ENCODE measurements at regions of chr1 and their contacts with region 1.

Region 1: DNA sequence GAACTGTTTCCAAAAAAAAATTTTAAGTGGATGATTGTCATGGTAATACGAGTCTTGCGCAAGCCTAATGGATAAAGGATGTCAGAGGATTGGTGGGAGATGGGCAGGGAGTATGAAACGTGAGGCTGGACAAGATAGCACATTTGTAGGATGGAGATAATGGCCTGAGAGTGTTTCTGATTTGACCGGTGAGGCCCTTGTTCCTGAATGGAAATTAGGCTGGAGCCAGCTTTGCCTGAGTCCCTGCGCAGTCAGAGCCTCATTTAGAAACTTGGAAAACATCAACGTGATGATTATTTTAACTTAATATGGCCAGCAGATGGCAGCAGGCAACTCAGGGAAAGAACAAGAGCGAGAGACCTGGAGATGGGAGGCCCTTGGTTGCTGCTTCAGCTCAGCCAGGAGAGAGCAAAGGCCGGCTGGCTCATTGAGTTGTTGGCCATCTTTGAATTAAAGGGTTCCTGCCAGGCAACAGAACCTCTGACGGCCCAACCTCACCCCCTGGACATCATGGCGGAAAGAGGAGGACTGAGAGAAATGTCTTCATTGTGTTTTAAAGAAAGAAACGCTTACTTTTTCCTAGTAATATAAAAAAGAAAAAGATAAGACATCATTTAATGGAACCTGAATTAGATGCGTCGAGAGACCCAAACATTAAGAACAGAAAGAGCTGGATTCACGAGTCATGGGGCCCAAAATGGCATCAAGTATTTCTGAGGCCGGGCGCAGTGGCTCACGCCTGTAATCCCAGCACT is 80.3 kb downstream of the SELENOF start:
- DNase-seq: peak; percentile 77
- H3K4me3 ChIP-seq: no peak overlapping the region
- H3K27ac ChIP-seq: peak overlapping the region in 5 of 8 donors; percentile 23 to 54 (median 35)
- H3K4me1 ChIP-seq: peaks cover 0 to 11% (median 5%) of the 10 kb centered on the region in 6 donors
- H3K27me3 ChIP-seq: no peaks in the 10 kb centered on the region
- CTCF ChIP-seq: peak in 10 of 11 experiments; percentile 5 to 72 (median 58)
- POLR2A ChIP-seq: no peak

Region 2: DNA sequence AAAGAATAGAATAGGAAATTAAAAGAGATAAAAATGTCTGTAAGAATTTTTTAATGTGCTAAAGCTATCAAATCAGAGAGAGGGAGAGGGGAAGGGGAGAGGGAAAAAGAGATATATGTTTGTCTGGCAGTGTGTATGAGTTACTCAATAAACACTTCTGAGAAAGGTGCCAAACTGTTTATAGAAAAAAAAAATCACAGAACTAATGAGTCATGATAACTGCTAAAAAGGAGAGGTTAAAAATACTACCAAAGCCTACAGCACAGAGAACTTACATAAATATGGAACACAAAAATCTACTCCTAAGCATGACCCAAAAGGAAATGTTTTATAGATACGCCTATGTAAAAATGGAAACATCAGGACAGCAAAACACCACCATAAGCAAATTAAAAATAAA is 34.8 kb after region 1 on chr1:
- intact Hi-C with region 1: no loop called
- DNase-seq: no peak
- H3K4me3 ChIP-seq: no peak overlapping the region
- H3K27ac ChIP-seq: no peak overlapping the region
- H3K4me1 ChIP-seq: peaks cover 0 to 43% (median 9%) of the 10 kb centered on the region in 6 donors
- H3K27me3 ChIP-seq: no peaks in the 10 kb centered on the region
- CTCF ChIP-seq: no peak
- POLR2A ChIP-seq: no peak

Region 3: DNA sequence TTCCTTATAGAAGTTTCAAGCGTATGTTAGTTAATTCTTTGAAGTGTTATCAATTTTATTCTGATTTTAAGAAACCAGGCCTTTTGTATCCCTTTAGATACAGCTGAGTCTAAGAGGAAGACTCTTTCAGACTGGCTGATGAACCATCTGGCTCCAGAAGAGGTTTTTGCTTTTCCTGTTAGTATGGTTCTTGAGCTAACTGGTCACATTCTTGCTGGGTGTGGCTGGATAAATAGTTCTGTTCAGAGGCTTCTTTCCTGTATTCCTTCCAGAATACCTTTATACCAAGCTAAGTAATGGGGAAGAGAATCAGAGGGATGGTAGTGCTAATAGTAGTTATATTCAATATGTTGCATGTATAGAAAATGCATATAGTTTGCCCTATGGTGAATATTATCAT is 93.2 kb after region 1 on chr1:
- intact Hi-C with region 1: no loop called
- DNase-seq: no peak
- H3K4me3 ChIP-seq: no peak overlapping the region
- H3K27ac ChIP-seq: peak overlapping the region in 2 of 8 donors; percentile 1 to 22
- H3K4me1 ChIP-seq: peaks cover 0 to 36% (median 14%) of the 10 kb centered on the region in 6 donors
- H3K27me3 ChIP-seq: no peaks in the 10 kb centered on the region
- CTCF ChIP-seq: no peak
- POLR2A ChIP-seq: no peak

Region 4: GRCh38 chr1:86965012-86965826 is 131.6 kb after region 1 on chr1:
- intact Hi-C with region 1: loop called (anchors 10 kb)
- DNase-seq: no peak
- H3K4me3 ChIP-seq: no peak overlapping the region
- H3K27ac ChIP-seq: peak overlapping the region in 2 of 8 donors; percentile 5 to 13
- H3K4me1 ChIP-seq: peaks cover 0 to 16% (median 6%) of the 10 kb centered on the region in 6 donors
- H3K27me3 ChIP-seq: no peaks in the 10 kb centered on the region
- CTCF ChIP-seq: peak in 10 of 11 experiments; percentile 7 to 52 (median 43)
- POLR2A ChIP-seq: no peak

Region 5: GRCh38 chr1:87084244-87084836 is 250.7 kb after region 1 on chr1:
- intact Hi-C with region 1: loop called (anchors 5 kb)
- DNase-seq: no peak
- H3K4me3 ChIP-seq: no peak overlapping the region
- H3K27ac ChIP-seq: no peak overlapping the region
- H3K4me1 ChIP-seq: peaks cover 0 to 20% (median 4%) of the 10 kb centered on the region in 6 donors
- H3K27me3 ChIP-seq: no peaks in the 10 kb centered on the region
- CTCF ChIP-seq: peak; percentile 23 to 72 (median 54)
- POLR2A ChIP-seq: no peak

Region 6: GRCh38 chr1:87243573-87243972 is 409.9 kb after region 1 on chr1:
- intact Hi-C with region 1: no loop called
- DNase-seq: no peak
- H3K4me3 ChIP-seq: no peak overlapping the region
- H3K27ac ChIP-seq: no peak overlapping the region
- H3K4me1 ChIP-seq: no peaks in the 10 kb centered on the region
- H3K27me3 ChIP-seq: peaks cover 0 to 8% (median 0%) of the 10 kb centered on the region in 7 donors
- CTCF ChIP-seq: no peak
- POLR2A ChIP-seq: no peak